T-cell (primary cell): ENCODE measurements at regions of chr4 and their contacts with region 1.

Region 1: GRCh38 chr4:101135371-101136010 is 211.8 kb downstream of the PPP3CA start:
- DNase-seq: no peak
- ATAC-seq: no peak
- H3K4me3 ChIP-seq: no peak overlapping the region
- H3K4me3 Mint-ChIP-seq: peak overlapping the region; percentile 34 to 57 (median 44)
- H3K27ac ChIP-seq: no peak overlapping the region
- H3K27ac Mint-ChIP-seq: peak overlapping the region; percentile 26 to 28
- H3K4me1 ChIP-seq: no peaks in the 10 kb centered on the region
- H3K4me1 Mint-ChIP-seq: peaks cover 36 to 57% (median 49%) of the 10 kb centered on the region in 3 donors
- H3K27me3 ChIP-seq: no peaks in the 10 kb centered on the region
- H3K27me3 Mint-ChIP-seq: no peaks in the 10 kb centered on the region

Region 2: GRCh38 chr4:100828986-100829685 is 306.4 kb before region 1 on chr4:
- CTCF ChIA-PET with region 1: no interaction called
- POLR2A ChIA-PET with region 1: no interaction called
- DNase-seq: no peak
- ATAC-seq: no peak
- H3K4me3 ChIP-seq: no peak overlapping the region
- H3K4me3 Mint-ChIP-seq: no peak overlapping the region
- H3K27ac ChIP-seq: no peak overlapping the region
- H3K27ac Mint-ChIP-seq: no peak overlapping the region
- H3K4me1 ChIP-seq: no peaks in the 10 kb centered on the region
- H3K4me1 Mint-ChIP-seq: no peaks in the 10 kb centered on the region
- H3K27me3 ChIP-seq: no peaks in the 10 kb centered on the region
- H3K27me3 Mint-ChIP-seq: peaks cover 0 to 4% of the 10 kb centered on the region in 2 donors

Region 3: DNA sequence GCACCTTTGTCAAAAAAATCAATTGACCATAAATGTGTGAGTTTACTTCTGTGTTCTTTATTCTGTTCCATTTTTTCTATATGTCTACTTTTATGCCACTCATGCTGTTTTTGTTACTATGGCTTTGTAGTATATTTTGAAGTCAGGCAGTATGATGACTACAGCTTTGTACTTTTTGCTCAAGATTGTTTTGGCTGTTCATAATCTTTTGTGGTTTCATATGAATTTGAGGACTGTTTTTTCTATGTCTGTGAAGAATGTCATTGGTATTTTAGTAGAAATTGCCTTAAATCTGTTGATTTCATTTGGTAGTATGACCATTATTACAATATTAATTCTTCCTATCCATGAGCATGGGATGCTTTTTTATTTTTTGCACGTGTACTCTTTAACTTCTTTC is 135.0 kb before region 1 on chr4:
- CTCF ChIA-PET with region 1: no interaction called
- POLR2A ChIA-PET with region 1: no interaction called
- DNase-seq: no peak
- ATAC-seq: no peak
- H3K4me3 ChIP-seq: no peak overlapping the region
- H3K4me3 Mint-ChIP-seq: no peak overlapping the region
- H3K27ac ChIP-seq: no peak overlapping the region
- H3K27ac Mint-ChIP-seq: peak overlapping the region; percentile 21 to 44
- H3K4me1 ChIP-seq: no peaks in the 10 kb centered on the region
- H3K4me1 Mint-ChIP-seq: peaks cover 0 to 11% (median 7%) of the 10 kb centered on the region in 3 donors
- H3K27me3 ChIP-seq: no peaks in the 10 kb centered on the region
- H3K27me3 Mint-ChIP-seq: no peaks in the 10 kb centered on the region

Region 4: DNA sequence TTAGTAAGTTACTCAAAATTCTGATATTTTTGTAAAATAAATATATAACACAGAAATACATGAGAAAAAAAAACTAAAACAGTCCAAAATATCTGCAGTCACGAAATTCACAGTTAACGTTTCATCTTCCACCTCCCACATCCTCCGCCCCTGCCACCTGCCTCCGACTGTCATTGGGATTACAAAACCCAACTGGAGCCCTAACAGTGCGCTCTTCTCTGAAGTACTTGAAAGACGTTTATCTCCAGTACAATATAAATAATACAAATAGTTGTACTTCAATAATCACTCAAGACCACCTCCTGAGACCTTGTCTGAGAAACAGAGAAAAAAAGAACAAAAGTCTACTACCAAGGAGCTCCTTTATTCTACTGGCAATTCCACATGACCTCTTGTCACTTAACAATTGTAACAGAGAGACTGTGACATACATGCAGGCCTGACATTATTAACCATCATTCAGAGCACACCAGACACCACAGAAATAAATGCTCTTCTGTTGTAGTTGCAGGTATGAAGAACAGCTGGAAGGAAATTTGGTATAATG is 68.8 kb before region 1 on chr4:
- CTCF ChIA-PET with region 1: no interaction called
- POLR2A ChIA-PET with region 1: interaction called in 1 of 2 experiments, 16 read pairs
- DNase-seq: no peak
- ATAC-seq: no peak
- H3K4me3 ChIP-seq: no peak overlapping the region
- H3K4me3 Mint-ChIP-seq: no peak overlapping the region
- H3K27ac ChIP-seq: no peak overlapping the region
- H3K27ac Mint-ChIP-seq: no peak overlapping the region
- H3K4me1 ChIP-seq: no peaks in the 10 kb centered on the region
- H3K4me1 Mint-ChIP-seq: no peaks in the 10 kb centered on the region
- H3K27me3 ChIP-seq: no peaks in the 10 kb centered on the region
- H3K27me3 Mint-ChIP-seq: no peaks in the 10 kb centered on the region

Region 5: DNA sequence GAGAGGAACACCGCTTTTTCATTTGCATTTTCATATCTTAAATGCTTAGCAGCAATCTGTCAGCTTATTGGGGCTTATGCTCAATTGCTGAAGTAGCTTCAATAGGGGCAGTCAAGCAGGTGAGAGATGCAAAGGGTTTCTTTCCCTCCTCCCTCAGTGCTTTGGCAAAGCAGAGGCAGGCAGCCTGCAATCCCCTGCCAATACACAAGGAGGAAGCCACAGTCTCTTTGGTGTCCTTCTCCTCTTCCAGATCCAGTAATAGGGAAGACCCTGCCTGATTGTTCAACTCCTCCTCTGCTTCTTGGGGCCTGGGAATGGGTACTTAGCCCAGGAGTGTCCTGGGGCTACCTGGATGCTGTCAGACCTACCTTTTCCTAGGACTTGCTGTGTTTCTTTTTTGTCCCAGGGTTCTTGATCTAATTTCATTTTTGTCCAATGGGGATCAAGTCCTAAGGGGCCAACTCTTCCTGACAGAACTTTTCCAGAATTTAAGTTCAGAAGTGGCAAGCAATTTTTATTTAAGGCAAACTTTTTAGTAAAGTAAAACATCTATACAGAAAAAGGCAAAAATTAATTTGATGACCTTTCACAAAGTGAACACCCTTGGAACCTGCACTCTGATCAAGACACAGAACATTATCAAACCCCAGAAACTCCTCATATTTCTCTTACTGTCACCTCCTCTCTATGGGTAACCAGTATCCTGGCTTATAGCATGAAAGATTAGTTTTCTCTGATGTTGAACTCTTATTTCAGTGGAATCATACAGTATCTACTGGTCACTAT is 48.5 kb before region 1 on chr4:
- CTCF ChIA-PET with region 1: no interaction called
- POLR2A ChIA-PET with region 1: no interaction called
- DNase-seq: no peak
- ATAC-seq: no peak
- H3K4me3 ChIP-seq: no peak overlapping the region
- H3K4me3 Mint-ChIP-seq: no peak overlapping the region
- H3K27ac ChIP-seq: no peak overlapping the region
- H3K27ac Mint-ChIP-seq: no peak overlapping the region
- H3K4me1 ChIP-seq: no peaks in the 10 kb centered on the region
- H3K4me1 Mint-ChIP-seq: peaks cover 0 to 10% (median 0%) of the 10 kb centered on the region in 3 donors
- H3K27me3 ChIP-seq: no peaks in the 10 kb centered on the region
- H3K27me3 Mint-ChIP-seq: no peaks in the 10 kb centered on the region

Region 6: DNA sequence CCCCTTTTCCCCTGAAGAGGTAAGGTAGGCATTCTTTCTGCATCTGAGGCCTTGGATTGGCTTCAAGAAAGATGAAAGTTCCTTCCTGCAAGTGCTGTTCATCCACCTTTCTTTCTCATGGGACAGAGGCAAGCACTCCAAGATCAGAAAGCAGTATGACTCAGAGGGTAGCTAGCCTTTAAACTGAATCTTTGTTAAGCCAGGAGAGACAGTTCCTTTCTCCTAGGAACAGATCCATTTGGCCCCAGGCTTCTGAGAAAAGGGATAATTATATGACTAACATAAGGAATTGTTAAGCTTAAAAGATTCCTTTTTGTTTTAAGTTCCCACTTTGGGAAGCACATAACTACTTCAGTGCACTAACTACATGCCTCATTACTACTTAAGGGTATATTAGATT is 19.9 kb after region 1 on chr4:
- CTCF ChIA-PET with region 1: no interaction called
- POLR2A ChIA-PET with region 1: no interaction called
- DNase-seq: no peak
- ATAC-seq: no peak
- H3K4me3 ChIP-seq: no peak overlapping the region
- H3K4me3 Mint-ChIP-seq: no peak overlapping the region
- H3K27ac ChIP-seq: no peak overlapping the region
- H3K27ac Mint-ChIP-seq: no peak overlapping the region
- H3K4me1 ChIP-seq: no peaks in the 10 kb centered on the region
- H3K4me1 Mint-ChIP-seq: peaks cover 31 to 53% (median 40%) of the 10 kb centered on the region in 3 donors
- H3K27me3 ChIP-seq: no peaks in the 10 kb centered on the region
- H3K27me3 Mint-ChIP-seq: no peaks in the 10 kb centered on the region